CD4-positive, alpha-beta memory T cell (primary cell): ENCODE measurements at regions of chr2 and their contacts with region 1.

Region 1: DNA sequence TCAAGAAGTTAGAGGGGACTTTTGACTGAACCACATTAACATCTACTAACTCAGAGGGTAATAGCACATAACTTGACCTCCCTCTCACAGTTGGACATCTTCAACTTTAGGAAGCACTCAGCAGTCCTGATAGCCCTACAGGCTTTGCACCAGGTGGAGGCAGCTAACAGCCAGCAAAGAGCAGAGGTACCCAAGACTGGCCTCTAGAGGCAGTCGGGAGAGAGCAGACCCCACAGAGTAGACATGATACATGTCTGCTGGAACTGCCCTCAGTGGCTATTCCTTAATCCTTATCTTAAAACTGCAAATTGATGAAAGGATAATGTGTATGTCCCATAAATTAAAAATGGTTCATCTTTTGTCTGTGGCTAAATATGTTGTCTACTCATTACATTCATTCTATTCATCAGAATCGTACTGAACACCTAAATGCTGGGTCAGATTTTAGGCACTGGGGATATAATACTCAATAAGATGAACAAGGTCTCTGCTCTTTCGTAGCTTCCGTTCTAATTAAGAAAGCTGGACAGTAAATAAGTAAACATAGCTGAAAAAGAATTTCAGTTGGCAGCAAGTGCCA is 49.8 kb downstream of the CAB39 start:
- DNase-seq: peak in 2 of 5 donors; percentile 19 to 26
- H3K4me3 ChIP-seq: no peak overlapping the region
- H3K4me3 Mint-ChIP-seq: peak overlapping the region in 1 of 8 donors; percentile 26
- H3K27ac ChIP-seq: no peak overlapping the region
- H3K27ac Mint-ChIP-seq: peak overlapping the region in 4 of 7 donors; percentile 0 to 62 (median 28)
- H3K4me1 ChIP-seq: peaks cover 43% of the 10 kb centered on the region
- H3K4me1 Mint-ChIP-seq: peaks cover 47 to 65% (median 55%) of the 10 kb centered on the region in 4 donors
- H3K27me3 ChIP-seq: no peaks in the 10 kb centered on the region
- H3K27me3 Mint-ChIP-seq: no peaks in the 10 kb centered on the region

Region 2: DNA sequence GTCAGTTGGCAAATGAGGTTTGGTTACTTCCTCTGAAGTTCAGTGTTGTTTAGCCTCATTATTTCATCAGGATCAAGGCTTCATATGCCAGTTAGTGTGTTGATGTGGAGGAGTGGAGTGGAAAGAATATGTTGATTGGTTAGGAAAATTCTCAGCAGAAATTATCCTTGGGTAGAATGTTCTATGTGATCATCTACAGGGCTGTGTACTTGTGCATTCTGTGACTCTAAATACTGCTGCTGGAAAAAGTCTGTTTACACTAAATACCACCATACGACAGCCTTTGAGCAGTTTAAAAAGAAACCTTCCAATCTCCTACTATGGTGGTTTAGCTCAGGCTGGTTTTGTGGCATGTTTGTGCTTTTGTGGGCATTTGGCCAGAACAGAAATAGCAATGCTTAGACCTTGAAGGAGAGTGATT is 24.0 kb before region 1 on chr2:
- CTCF ChIA-PET with region 1: no interaction called
- POLR2A ChIA-PET with region 1: no interaction called
- intact Hi-C with region 1: no loop called
- DNase-seq: no peak
- H3K4me3 ChIP-seq: no peak overlapping the region
- H3K4me3 Mint-ChIP-seq: peak overlapping the region in 6 of 8 donors; percentile 15 to 59 (median 48)
- H3K27ac ChIP-seq: peak overlapping the region; percentile 1
- H3K27ac Mint-ChIP-seq: peak overlapping the region; percentile 8 to 59 (median 54)
- H3K4me1 ChIP-seq: peaks cover 81% of the 10 kb centered on the region
- H3K4me1 Mint-ChIP-seq: peaks cover 59 to 85% (median 71%) of the 10 kb centered on the region in 4 donors
- H3K27me3 ChIP-seq: no peaks in the 10 kb centered on the region
- H3K27me3 Mint-ChIP-seq: no peaks in the 10 kb centered on the region

Region 3: GRCh38 chr2:230774348-230774951 is 12.0 kb after region 1 on chr2:
- CTCF ChIA-PET with region 1: interaction called, 10 read pairs
- POLR2A ChIA-PET with region 1: no interaction called
- intact Hi-C with region 1: no loop called
- DNase-seq: no peak
- H3K4me3 ChIP-seq: no peak overlapping the region
- H3K4me3 Mint-ChIP-seq: no peak overlapping the region
- H3K27ac ChIP-seq: no peak overlapping the region
- H3K27ac Mint-ChIP-seq: peak overlapping the region in 4 of 7 donors; percentile 1 to 68 (median 16)
- H3K4me1 ChIP-seq: peaks cover 93% of the 10 kb centered on the region
- H3K4me1 Mint-ChIP-seq: peaks cover 72 to 90% (median 82%) of the 10 kb centered on the region in 4 donors
- H3K27me3 ChIP-seq: no peaks in the 10 kb centered on the region
- H3K27me3 Mint-ChIP-seq: no peaks in the 10 kb centered on the region

Region 4: DNA sequence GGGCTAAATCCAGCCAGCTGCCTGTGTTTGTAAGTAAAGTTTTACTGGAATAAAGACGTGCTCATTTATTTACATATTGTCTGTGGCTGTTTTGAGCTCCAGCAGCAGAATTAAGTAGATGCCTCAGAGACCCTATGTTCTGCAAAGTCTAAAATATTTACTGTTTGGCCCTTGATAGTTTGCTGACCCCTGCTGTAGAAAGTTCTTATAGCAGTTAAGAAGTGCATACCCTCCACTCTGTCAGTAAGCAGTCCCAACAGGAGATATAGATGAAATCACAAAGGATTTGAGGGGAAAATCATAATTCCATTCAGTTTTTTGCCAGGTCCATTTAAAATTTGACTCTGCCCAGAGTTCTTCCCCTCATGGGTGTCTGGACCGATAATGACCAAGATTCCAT is 52.2 kb after region 1 on chr2:
- CTCF ChIA-PET with region 1: no interaction called
- POLR2A ChIA-PET with region 1: no interaction called
- intact Hi-C with region 1: no loop called
- DNase-seq: no peak
- H3K4me3 ChIP-seq: no peak overlapping the region
- H3K4me3 Mint-ChIP-seq: no peak overlapping the region
- H3K27ac ChIP-seq: no peak overlapping the region
- H3K27ac Mint-ChIP-seq: peak overlapping the region in 3 of 7 donors; percentile 25 to 64 (median 51)
- H3K4me1 ChIP-seq: no peaks in the 10 kb centered on the region
- H3K4me1 Mint-ChIP-seq: peaks cover 5 to 20% (median 13%) of the 10 kb centered on the region in 4 donors
- H3K27me3 ChIP-seq: no peaks in the 10 kb centered on the region
- H3K27me3 Mint-ChIP-seq: no peaks in the 10 kb centered on the region